PC-9 (cell line): ENCODE measurements at regions of chr14 and their contacts with region 1.

Region 1: GRCh38 chr14:98808485-98809407 is 463.3 kb downstream of the BCL11B start:
- DNase-seq: no peak
- H3K4me3 ChIP-seq: no peak overlapping the region
- H3K27ac ChIP-seq: no peak overlapping the region
- H3K4me1 ChIP-seq: no peaks in the 10 kb centered on the region
- H3K27me3 ChIP-seq: peaks cover 7% of the 10 kb centered on the region
- CTCF ChIP-seq: no peak

Region 2: DNA sequence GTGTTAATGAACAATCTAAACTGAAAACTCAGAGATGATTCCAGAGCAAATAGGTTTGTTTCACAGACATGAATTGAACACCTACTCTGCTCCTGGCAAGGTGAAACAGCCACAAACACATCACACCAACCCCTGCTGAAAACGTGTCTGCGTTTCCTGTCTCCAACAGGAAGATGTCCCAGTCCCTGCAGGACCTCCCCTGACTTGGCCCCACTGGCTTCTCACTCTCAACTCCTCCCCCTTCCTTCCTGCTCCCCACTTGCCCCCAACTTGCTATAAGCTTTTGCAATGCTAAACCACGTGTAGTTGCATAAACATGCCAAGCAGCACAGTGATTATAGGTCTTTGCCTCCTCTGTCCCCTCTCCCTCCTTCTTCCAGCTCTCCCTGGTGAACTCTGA is 104.3 kb before region 1 on chr14:
- CTCF ChIA-PET with region 1: no interaction called
- POLR2A ChIA-PET with region 1: no interaction called
- intact Hi-C with region 1: no loop called
- DNase-seq: no peak
- H3K4me3 ChIP-seq: no peak overlapping the region
- H3K27ac ChIP-seq: no peak overlapping the region
- H3K4me1 ChIP-seq: no peaks in the 10 kb centered on the region
- H3K27me3 ChIP-seq: no peaks in the 10 kb centered on the region
- CTCF ChIP-seq: no peak

Region 3: DNA sequence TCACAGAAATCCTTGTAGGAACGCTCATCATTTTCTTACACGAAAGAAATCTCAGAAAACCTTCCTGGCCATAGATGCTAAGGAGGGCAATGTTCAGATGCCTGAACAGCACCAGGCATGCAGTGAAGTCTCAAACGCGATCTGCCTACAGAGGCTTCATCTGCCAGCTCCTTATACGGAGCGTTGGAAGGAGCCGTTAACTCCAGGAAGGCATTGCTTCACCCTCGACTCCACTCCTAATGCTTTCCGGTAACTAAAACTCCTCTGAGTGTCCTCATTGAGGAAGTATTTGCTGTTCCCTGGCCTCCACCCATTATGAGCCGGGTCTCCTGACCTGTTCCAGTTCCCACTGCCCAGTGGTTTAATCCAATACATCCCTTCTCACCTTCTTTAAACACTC is 39.4 kb before region 1 on chr14:
- CTCF ChIA-PET with region 1: no interaction called
- POLR2A ChIA-PET with region 1: no interaction called
- intact Hi-C with region 1: no loop called
- DNase-seq: no peak
- H3K4me3 ChIP-seq: no peak overlapping the region
- H3K27ac ChIP-seq: no peak overlapping the region
- H3K4me1 ChIP-seq: no peaks in the 10 kb centered on the region
- H3K27me3 ChIP-seq: no peaks in the 10 kb centered on the region
- CTCF ChIP-seq: no peak

Region 4: GRCh38 chr14:98791661-98792060 is 17.1 kb before region 1 on chr14:
- CTCF ChIA-PET with region 1: no interaction called
- POLR2A ChIA-PET with region 1: interaction called, 27 read pairs
- intact Hi-C with region 1: no loop called
- DNase-seq: no peak
- H3K4me3 ChIP-seq: no peak overlapping the region
- H3K27ac ChIP-seq: no peak overlapping the region
- H3K4me1 ChIP-seq: no peaks in the 10 kb centered on the region
- H3K27me3 ChIP-seq: no peaks in the 10 kb centered on the region
- CTCF ChIP-seq: no peak

Region 5: DNA sequence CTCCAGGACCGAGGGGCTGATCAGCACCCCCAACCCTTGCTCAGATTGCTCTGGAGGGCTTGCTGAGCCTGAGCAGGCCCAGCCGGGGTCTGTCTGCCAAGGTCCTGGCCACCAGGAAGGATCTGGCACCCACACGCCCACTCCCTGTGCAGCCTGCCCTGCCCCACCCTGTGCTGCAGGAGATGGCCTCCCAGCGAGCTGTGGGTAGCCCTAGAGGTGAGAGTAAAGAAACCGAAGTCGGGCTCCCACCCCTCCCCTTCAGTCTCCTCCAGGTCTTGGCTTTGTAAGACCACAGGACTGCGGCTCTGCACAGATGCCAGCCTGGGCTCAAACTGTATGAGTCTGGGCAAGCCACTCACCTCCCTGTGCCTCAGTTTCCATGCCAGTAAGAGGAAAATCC is 155.4 kb after region 1 on chr14:
- CTCF ChIA-PET with region 1: no interaction called
- POLR2A ChIA-PET with region 1: no interaction called
- intact Hi-C with region 1: no loop called
- DNase-seq: no peak
- H3K4me3 ChIP-seq: no peak overlapping the region
- H3K27ac ChIP-seq: no peak overlapping the region
- H3K4me1 ChIP-seq: no peaks in the 10 kb centered on the region
- H3K27me3 ChIP-seq: no peaks in the 10 kb centered on the region
- CTCF ChIP-seq: no peak